ENCODE measurements at regions of chr14 and their contacts with region 1.

Region 1: DNA sequence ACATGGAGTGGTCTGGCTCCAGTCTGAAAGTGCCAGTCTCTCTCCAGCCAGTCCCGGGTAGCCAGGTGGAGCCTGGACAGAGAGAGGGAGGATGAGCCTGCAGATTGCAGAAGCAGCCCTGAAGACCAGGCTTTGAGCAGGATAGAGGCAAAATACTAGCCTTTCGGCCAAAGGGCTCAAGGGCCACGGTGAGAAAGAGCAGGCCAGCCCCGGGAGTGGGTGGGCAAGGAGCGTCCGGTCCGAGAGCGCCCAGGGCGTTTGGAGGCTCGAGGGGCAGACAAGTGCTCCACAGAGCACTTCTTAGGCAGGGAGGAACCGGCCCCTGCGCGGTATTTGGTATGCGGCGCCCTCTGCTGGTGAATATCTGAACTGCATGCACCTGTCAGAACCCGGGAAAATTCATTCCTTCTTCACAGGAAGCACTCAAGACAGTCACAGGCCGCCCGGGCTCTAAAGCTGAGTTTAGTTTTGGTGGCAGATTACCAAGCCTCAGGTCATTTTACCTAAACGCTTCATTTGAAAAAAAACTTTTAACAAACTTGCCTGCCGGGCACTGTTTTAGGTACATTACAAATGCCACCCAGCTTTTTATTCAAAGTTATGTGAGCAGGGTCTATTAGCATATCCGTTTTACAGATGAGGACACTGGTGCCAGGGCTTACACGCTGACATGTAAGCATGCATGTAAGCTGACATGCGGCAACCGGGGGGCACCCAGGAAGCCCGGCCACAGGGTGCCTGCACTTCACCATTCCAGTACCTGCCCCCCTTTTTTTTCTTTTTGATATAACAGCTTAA is 21.0 kb upstream of the PSMC1 start:
- DNase-seq: no peak
- H3K4me3 ChIP-seq: no peak overlapping the region
- H3K27me3 ChIP-seq: no peaks in the 10 kb centered on the region
- CTCF ChIP-seq: peak; percentile 88

Region 2: GRCh38 chr14:89936658-89937185 is 298.7 kb before region 1 on chr14:
- CTCF ChIA-PET with region 1: interaction called, 11 read pairs
- POLR2A ChIA-PET with region 1: no interaction called
- DNase-seq: no peak
- H3K4me3 ChIP-seq: no peak overlapping the region
- H3K27me3 ChIP-seq: no peaks in the 10 kb centered on the region
- CTCF ChIP-seq: no peak

Region 3: GRCh38 chr14:89959853-89960445 is 275.4 kb before region 1 on chr14:
- CTCF ChIA-PET with region 1: interaction called, 14 read pairs
- POLR2A ChIA-PET with region 1: no interaction called
- DNase-seq: no peak
- H3K4me3 ChIP-seq: no peak overlapping the region
- H3K27me3 ChIP-seq: no peaks in the 10 kb centered on the region
- CTCF ChIP-seq: no peak

Region 4: DNA sequence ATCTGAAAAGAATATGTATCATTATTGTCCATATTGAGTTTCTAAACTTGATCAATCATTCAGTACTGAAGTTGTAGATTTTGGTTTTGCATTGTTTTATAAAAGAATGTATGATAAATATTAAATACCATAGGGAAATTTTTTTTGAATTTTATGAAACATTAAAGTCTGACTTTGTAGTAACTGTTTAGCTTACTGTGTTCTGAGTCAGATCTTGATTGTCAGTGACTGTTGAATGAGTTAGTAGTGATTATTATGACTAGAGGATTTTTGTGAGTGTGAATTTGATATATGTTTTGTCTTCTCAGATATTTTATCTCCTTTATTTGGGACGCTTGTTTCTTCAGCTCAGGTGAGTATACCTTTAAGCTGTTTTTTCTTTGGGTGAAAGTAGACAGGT is 269.5 kb before region 1 on chr14:
- CTCF ChIA-PET with region 1: interaction called, 156 read pairs
- POLR2A ChIA-PET with region 1: no interaction called
- DNase-seq: no peak
- H3K4me3 ChIP-seq: no peak overlapping the region
- H3K27me3 ChIP-seq: no peaks in the 10 kb centered on the region
- CTCF ChIP-seq: no peak

Region 5: GRCh38 chr14:89973234-89973823 is 262.0 kb before region 1 on chr14:
- CTCF ChIA-PET with region 1: interaction called, 156 read pairs
- POLR2A ChIA-PET with region 1: no interaction called
- DNase-seq: no peak
- H3K4me3 ChIP-seq: no peak overlapping the region
- H3K27me3 ChIP-seq: no peaks in the 10 kb centered on the region
- CTCF ChIP-seq: peak; percentile 94

Measured in BJ (cell line).